ENCODE measurements at regions of chr6 and their contacts with region 1.

Region 1: DNA sequence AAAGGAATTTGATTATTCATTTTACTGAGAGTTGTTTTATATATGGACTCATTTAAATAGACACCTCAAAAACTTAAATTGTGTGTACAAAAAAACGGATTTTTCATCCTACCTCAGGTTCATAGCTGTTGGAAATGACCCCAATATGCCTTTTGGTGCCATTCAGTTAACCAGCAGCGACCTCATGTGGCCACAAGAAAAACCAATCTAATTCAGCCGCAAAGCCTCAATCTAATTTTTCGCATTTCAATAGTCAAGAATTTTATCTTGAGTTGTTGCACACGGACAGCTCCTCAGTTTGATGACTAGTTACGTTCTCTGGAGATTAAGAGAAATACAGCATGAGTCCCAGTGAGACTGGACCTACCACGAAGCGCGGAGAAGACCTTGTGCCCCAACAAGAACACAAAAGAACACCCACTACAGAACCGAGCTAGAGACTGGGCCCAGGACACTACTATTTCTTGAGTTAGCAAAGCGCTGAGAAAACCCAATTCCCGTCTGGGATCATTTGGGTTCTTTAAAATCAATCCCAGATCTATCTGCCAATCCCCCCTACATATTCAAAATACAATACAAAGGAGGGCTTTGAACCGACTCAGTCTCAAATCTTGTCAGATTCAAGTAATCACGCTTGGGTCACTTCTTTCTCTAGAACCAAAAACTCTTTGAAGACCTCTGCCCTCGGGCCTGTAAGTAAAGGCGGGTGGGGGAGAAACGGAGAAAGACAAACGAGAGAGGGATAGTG is 1.1 kb downstream of the TCP11 start:
- DNase-seq: peak; percentile 74
- H3K4me3 ChIP-seq: no peak overlapping the region
- H3K27ac ChIP-seq: no peak overlapping the region
- H3K4me1 ChIP-seq: peaks cover 0 to 11% (median 9%) of the 10 kb centered on the region in 4 donors
- H3K27me3 ChIP-seq: peaks cover 0 to 10% (median 0%) of the 10 kb centered on the region in 3 donors
- CTCF ChIP-seq: peak; percentile 84 to 91 (median 88)
- EP300 ChIP-seq: no peak
- POLR2A ChIP-seq: no peak

Region 2: GRCh38 chr6:34791701-34792235 is 348.3 kb before region 1 on chr6 and contains the start of gene BLTP3A:
- intact Hi-C with region 1: loop called (anchors 10 kb)
- DNase-seq: peak; percentile 76
- H3K4me3 ChIP-seq: peak within 1 kb of the TSS; percentile 68 to 98 (median 79)
- H3K27ac ChIP-seq: peak within 1 kb of the TSS; percentile 91 to 95 (median 92)
- H3K4me1 ChIP-seq: peaks cover 0 to 20% (median 13%) of the 10 kb centered on the region in 4 donors
- H3K27me3 ChIP-seq: no peaks in the 10 kb centered on the region
- CTCF ChIP-seq: no peak
- EP300 ChIP-seq: no peak
- POLR2A ChIP-seq: no peak
- total RNA-seq, gene BLTP3A: 6.7 to 11.6 (median 7.2) TPM

Region 3: GRCh38 chr6:34887753-34888513 is 252.1 kb before region 1 on chr6 and contains the start of gene TAF11:
- intact Hi-C with region 1: loop called (anchors 5 kb)
- DNase-seq: peak; percentile 97
- H3K4me3 ChIP-seq: peak within 1 kb of the TSS; percentile 67 to 89 (median 79)
- H3K27ac ChIP-seq: peak within 1 kb of the TSS; percentile 87 to 93 (median 90)
- H3K4me1 ChIP-seq: peaks cover 0 to 38% (median 25%) of the 10 kb centered on the region in 4 donors
- H3K27me3 ChIP-seq: no peaks in the 10 kb centered on the region
- CTCF ChIP-seq: no peak
- EP300 ChIP-seq: peak in 1 of 4 donors; percentile 78
- POLR2A ChIP-seq: peak; percentile 75 to 78
- total RNA-seq, gene TAF11: 31.0 to 37.7 (median 31.4) TPM

Region 4: GRCh38 chr6:34986845-34987246 is 153.2 kb before region 1 on chr6:
- intact Hi-C with region 1: loop called (anchors 1 kb)
- DNase-seq: peak; percentile 83
- H3K4me3 ChIP-seq: no peak overlapping the region
- H3K27ac ChIP-seq: peak overlapping the region in 3 of 4 donors; percentile 7 to 36 (median 16)
- H3K4me1 ChIP-seq: peaks cover 0 to 28% (median 16%) of the 10 kb centered on the region in 4 donors
- H3K27me3 ChIP-seq: no peaks in the 10 kb centered on the region
- CTCF ChIP-seq: peak; percentile 78 to 88 (median 84)
- EP300 ChIP-seq: no peak
- POLR2A ChIP-seq: no peak

Region 5: DNA sequence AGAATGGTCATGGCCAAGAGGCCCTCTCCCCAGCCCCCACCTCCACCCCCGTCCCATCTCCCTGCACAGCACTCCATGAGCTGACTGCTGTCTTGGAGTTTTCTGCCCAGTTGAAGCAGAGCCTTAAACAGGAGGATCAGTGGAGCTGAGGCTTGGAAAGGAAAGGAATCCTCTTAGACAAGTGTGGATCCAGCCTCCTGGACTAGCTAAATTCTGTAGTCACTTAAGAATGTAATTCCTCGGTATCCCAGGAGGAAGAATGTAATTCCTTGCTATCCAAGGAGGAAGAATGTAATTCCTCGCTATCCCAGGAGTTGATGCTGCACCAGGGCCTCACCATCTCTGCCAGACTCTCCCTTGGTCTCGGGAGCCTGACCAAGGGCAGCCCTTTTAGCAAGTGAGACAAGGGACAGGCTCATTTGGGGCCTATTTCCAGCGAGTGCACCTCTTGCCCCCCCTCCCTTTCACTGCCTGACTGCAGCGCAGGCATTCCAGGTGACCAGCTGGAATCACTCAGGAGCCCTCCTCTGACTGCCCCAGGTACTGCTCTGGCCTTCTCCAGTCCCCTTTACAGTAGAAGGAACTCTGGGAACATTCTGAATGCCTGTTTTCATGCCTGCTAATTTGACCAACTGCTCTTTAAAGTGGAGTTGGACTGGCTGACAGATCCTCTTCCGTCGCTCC is 75.2 kb before region 1 on chr6:
- intact Hi-C with region 1: loop called (anchors 10 kb)
- DNase-seq: no peak
- H3K4me3 ChIP-seq: no peak overlapping the region
- H3K27ac ChIP-seq: peak overlapping the region; percentile 23 to 77 (median 66)
- H3K4me1 ChIP-seq: peaks cover 0 to 35% (median 24%) of the 10 kb centered on the region in 4 donors
- H3K27me3 ChIP-seq: no peaks in the 10 kb centered on the region
- CTCF ChIP-seq: no peak
- EP300 ChIP-seq: no peak
- POLR2A ChIP-seq: no peak

Region 6: GRCh38 chr6:35128042-35128441 is 12.0 kb before region 1 on chr6:
- intact Hi-C with region 1: no loop called
- DNase-seq: no peak
- H3K4me3 ChIP-seq: no peak overlapping the region
- H3K27ac ChIP-seq: no peak overlapping the region
- H3K4me1 ChIP-seq: no peaks in the 10 kb centered on the region
- H3K27me3 ChIP-seq: no peaks in the 10 kb centered on the region
- CTCF ChIP-seq: no peak
- EP300 ChIP-seq: no peak
- POLR2A ChIP-seq: no peak

Region 7: DNA sequence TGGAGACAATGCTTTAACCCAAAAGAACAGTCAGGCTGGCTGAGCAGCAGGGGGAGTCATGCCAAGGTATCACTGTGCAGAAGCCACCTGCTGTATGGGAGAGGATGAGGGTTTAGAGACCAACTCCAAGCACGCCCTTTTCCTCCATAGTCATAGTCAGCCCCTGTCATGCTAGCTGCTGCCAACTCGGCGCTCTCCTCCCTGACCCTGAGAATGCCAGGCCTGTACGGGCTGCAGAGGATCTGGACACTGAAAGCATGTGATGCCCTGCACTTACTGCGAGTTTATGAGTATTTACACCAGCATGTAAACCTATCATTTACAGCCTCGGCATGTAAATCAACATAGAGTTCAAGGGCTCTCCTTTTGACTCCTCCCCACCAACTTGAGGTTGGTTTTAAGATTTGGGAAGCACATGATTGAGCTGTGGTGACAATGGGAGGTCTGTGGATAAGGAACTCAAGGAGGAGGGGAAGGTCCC is 62.0 kb after region 1 on chr6:
- intact Hi-C with region 1: no loop called
- DNase-seq: no peak
- H3K4me3 ChIP-seq: no peak overlapping the region
- H3K27ac ChIP-seq: peak overlapping the region in 1 of 4 donors; percentile 38
- H3K4me1 ChIP-seq: peaks cover 0 to 9% (median 6%) of the 10 kb centered on the region in 4 donors
- H3K27me3 ChIP-seq: peaks cover 0 to 6% (median 0%) of the 10 kb centered on the region in 3 donors
- CTCF ChIP-seq: no peak
- EP300 ChIP-seq: no peak
- POLR2A ChIP-seq: no peak

Region 8: DNA sequence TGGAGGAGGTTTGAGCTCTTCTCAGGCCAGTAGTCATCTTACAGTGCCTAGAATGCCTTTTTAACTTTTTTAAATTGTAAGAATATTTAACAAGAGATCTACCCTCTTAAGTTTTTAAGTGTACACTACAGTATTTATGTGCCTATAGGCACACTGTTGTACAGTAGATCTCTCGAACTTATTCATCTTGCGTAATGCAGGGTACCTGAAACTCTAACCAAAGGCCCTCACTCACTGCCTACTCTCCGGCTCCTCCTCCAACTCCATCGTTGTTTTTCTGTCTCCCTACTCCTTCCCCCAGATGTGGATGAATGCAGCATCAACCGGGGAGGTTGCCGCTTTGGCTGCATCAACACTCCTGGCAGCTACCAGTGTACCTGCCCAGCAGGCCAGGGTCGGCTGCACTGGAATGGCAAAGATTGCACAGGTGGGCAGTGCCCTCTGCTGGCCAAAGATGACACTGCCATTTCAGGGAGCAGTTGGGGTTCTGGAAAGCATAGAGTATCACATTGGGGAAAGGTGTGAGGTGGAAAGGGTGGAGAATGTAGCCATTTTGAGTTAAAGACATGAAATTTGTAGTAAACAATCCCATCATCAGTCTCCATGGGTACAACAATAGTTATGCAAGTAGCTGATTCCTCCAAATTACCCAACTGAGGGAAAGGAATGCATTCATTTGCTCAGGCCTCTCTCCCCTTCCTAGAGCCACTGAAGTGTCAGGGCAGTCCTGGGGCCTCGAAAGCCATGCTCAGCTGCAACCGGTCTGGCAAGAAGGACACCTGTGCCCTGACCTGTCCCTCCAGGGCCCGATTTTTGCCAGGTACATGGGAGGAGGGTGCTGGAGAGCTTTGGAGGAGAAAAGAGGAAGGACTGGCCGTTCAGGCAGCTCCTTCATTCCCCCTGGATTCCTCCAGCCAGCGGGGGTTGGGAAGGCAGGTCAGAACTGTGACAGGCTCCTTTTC is 101.0 kb after region 1 on chr6:
- intact Hi-C with region 1: loop called (anchors 2 kb)
- DNase-seq: peak; percentile 82
- H3K4me3 ChIP-seq: no peak overlapping the region
- H3K27ac ChIP-seq: peak overlapping the region in 1 of 4 donors; percentile 14
- H3K4me1 ChIP-seq: peaks cover 0 to 39% (median 34%) of the 10 kb centered on the region in 4 donors
- H3K27me3 ChIP-seq: no peaks in the 10 kb centered on the region
- CTCF ChIP-seq: peak; percentile 84 to 97 (median 93)
- EP300 ChIP-seq: no peak
- POLR2A ChIP-seq: no peak

Region 9: GRCh38 chr6:35489995-35490733 is 350.1 kb after region 1 on chr6:
- intact Hi-C with region 1: no loop called
- DNase-seq: peak; percentile 98
- H3K4me3 ChIP-seq: peak overlapping the region; percentile 19 to 99 (median 98)
- H3K27ac ChIP-seq: peak overlapping the region; percentile 100
- H3K4me1 ChIP-seq: peaks cover 0 to 100% (median 99%) of the 10 kb centered on the region in 4 donors
- H3K27me3 ChIP-seq: no peaks in the 10 kb centered on the region
- CTCF ChIP-seq: no peak
- EP300 ChIP-seq: peak in 2 of 4 donors; percentile 74 to 75
- POLR2A ChIP-seq: peak; percentile 8 to 39